ENCODE measurements at regions of chr2 and their contacts with region 1.

Region 1: DNA sequence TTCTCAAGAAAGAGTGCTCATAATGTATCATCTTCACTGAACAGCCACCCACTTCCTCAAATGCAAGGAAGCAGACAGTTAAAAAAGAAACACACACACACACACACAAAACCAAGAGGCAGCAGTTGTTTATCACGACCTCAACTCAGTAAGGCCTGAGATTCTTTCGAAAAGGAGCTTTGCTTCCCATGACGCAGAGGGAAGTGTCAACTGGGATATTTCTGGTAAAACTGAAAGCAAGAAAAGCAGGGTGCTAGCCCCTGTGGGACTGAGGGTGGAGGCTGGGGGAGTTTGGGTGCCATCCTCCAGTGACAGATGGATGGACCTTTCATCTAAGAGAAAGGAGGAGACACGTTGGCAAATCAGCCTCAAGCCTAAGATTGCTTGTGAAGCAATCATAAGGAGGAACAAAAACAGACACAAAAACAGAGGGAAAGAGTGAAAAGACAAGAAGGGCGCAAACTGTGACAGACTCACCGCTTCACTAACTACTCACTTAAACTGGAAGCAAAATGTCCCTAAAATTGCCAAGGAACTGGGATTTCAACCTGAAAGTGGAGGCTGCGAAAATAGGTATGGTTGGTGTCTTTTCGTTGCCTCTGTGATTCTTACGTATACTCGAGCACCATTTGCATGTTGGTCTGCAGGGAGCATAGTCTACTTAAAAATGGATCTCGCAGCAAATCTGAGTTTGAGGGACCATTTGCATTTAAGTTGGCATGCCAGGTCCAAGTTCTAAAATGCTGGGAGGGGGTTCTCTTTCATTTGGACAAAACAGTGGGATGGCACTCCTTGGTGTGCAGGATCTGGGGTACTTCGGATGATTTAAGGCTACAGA is at the start of gene ARHGAP25:
- DNase-seq: peak; percentile 88
- H3K4me3 Mint-ChIP-seq: no peak within 1 kb of the TSS
- H3K27ac Mint-ChIP-seq: no peak within 1 kb of the TSS
- H3K4me1 Mint-ChIP-seq: peaks cover 33% of the 10 kb centered on the region
- H3K27me3 Mint-ChIP-seq: no peaks in the 10 kb centered on the region
- total RNA-seq, gene ARHGAP25: 43.0 to 46.7 TPM

Region 2: DNA sequence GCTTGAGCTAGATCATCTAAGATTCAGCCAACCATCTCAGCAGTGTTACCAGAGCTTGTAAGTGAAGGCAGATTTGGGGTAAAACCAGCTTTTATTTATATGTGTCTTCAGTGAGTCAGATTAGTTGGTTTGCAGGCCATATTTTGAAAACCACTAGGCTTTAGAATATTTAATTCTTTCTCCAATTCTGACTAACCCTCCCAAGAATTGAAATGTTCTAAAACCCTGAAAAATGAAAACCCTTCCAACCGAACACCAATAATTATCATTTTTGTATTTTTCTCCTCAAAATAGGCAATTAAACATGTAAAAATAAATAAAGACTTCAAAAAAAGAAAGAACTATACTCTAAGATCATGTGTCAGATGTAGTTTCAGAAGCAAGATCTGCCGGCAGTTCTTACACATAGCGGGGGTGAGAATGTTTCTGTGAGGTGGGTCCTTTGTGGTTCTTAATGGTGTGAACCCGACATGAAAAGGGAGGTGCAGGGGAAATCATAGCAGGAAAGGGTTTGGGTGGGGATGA is 355.7 kb before region 1 on chr2:
- CTCF ChIA-PET with region 1: no interaction called
- intact Hi-C with region 1: loop called (anchors 2 kb)
- DNase-seq: peak; percentile 66
- H3K4me3 Mint-ChIP-seq: no peak overlapping the region
- H3K27ac Mint-ChIP-seq: peak overlapping the region; percentile 47
- H3K4me1 Mint-ChIP-seq: peaks cover 18% of the 10 kb centered on the region
- H3K27me3 Mint-ChIP-seq: peaks cover 22% of the 10 kb centered on the region

Region 3: DNA sequence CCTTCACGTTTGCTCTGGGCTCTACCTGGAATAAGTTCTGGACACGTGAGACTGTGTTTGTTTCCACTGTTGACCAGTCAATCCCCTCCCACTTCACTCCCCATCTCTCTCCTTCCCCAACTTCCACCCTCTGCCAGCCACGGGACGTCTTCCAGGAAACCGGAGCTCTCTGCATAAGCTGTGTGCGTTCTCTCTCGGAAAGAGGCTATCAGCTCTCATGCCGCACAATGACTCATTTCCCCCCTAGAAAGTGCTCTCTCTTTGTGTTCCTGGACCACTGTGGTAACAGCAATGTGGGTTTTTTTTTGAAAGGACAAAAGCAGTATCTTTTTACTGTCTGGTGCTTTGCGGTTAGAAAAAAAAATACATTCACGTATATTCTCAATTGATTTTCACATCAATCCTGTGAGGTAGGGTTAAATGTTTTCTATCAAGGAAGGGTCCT is 81.3 kb before region 1 on chr2:
- CTCF ChIA-PET with region 1: no interaction called
- intact Hi-C with region 1: loop called (anchors 2 kb)
- DNase-seq: peak; percentile 78
- H3K4me3 Mint-ChIP-seq: peak overlapping the region; percentile 0
- H3K27ac Mint-ChIP-seq: peak overlapping the region; percentile 63
- H3K4me1 Mint-ChIP-seq: peaks cover 43% of the 10 kb centered on the region
- H3K27me3 Mint-ChIP-seq: peaks cover 18% of the 10 kb centered on the region

Region 4: GRCh38 chr2:68721482-68722101 is 13.3 kb before region 1 on chr2:
- CTCF ChIA-PET with region 1: interaction called, 29 read pairs
- intact Hi-C with region 1: loop called (anchors 1 kb)
- DNase-seq: peak; percentile 62
- H3K4me3 Mint-ChIP-seq: peak overlapping the region; percentile 52
- H3K27ac Mint-ChIP-seq: peak overlapping the region; percentile 87
- H3K4me1 Mint-ChIP-seq: peaks cover 82% of the 10 kb centered on the region
- H3K27me3 Mint-ChIP-seq: no peaks in the 10 kb centered on the region

Region 5: GRCh38 chr2:68766376-68766845 is 31.5 kb after region 1 on chr2:
- CTCF ChIA-PET with region 1: interaction called, 12 read pairs
- intact Hi-C with region 1: loop called (anchors 1 kb)
- DNase-seq: peak; percentile 77
- H3K4me3 Mint-ChIP-seq: peak overlapping the region; percentile 77
- H3K27ac Mint-ChIP-seq: peak overlapping the region; percentile 95
- H3K4me1 Mint-ChIP-seq: peaks cover 97% of the 10 kb centered on the region
- H3K27me3 Mint-ChIP-seq: no peaks in the 10 kb centered on the region

Region 6: GRCh38 chr2:70094978-70095719 is 1360.2 kb after region 1 on chr2:
- CTCF ChIA-PET with region 1: no interaction called
- intact Hi-C with region 1: loop called (anchors 10 kb)
- DNase-seq: peak; percentile 75
- H3K4me3 Mint-ChIP-seq: peak overlapping the region; percentile 77
- H3K27ac Mint-ChIP-seq: peak overlapping the region; percentile 98
- H3K4me1 Mint-ChIP-seq: peaks cover 65% of the 10 kb centered on the region
- H3K27me3 Mint-ChIP-seq: no peaks in the 10 kb centered on the region